MCF 10A (cell line): ENCODE measurements at regions of chr6 and their contacts with region 1.

Region 1: GRCh38 chr6:64280569-64280968 is 645.0 kb downstream of the PHF3 start:
- DNase-seq: peak; percentile 65
- H3K4me3 Mint-ChIP-seq: no peak overlapping the region
- H3K27ac Mint-ChIP-seq: no peak overlapping the region
- H3K4me1 Mint-ChIP-seq: no peaks in the 10 kb centered on the region
- H3K27me3 Mint-ChIP-seq: no peaks in the 10 kb centered on the region
- CTCF ChIP-seq: peak; percentile 47

Region 2: DNA sequence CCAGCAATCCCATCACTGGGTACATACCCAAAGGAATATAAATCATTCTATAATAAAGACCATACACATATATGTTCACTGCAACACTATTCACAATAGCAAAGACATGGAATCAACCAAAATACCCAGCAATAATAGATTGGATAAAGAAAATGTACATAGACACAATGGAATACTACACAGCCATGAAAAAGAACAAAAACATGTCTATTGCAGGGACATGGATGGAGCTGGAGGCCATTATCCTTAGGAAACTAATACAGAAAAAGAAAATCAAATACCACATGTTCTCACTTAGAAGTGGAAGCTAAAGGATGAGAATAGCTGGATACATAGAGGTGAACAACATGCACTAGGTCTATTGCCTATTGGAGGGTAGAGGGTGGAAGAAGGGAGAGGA is 29.6 kb after region 1 on chr6:
- CTCF ChIA-PET with region 1: no interaction called
- POLR2A ChIA-PET with region 1: no interaction called
- intact Hi-C with region 1: no loop called
- DNase-seq: no peak
- H3K4me3 Mint-ChIP-seq: no peak overlapping the region
- H3K27ac Mint-ChIP-seq: no peak overlapping the region
- H3K4me1 Mint-ChIP-seq: no peaks in the 10 kb centered on the region
- H3K27me3 Mint-ChIP-seq: no peaks in the 10 kb centered on the region
- CTCF ChIP-seq: no peak

Region 3: DNA sequence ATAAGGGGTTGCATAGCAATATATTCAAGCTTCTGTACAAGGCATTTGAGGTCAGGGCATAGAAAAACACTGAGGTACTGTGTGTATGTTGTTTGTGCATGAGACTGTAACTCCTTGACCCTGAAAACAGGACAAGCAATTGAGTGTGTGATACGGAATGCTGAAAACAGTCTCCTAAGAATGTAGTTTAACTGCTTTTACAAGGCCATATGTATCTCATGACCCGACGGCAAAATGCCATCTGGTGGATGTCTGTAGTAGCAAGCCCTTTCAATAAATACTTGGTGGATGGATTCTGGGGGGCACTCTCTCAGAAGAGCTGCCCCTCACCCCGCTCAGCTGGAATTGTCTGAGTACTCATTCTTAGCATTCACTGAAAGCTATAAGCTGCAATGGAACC is 1495.7 kb after region 1 on chr6:
- CTCF ChIA-PET with region 1: interaction called, 3 read pairs
- POLR2A ChIA-PET with region 1: no interaction called
- intact Hi-C with region 1: loop called (anchors 2 kb)
- DNase-seq: no peak
- H3K4me3 Mint-ChIP-seq: no peak overlapping the region
- H3K27ac Mint-ChIP-seq: no peak overlapping the region
- H3K4me1 Mint-ChIP-seq: no peaks in the 10 kb centered on the region
- H3K27me3 Mint-ChIP-seq: no peaks in the 10 kb centered on the region
- CTCF ChIP-seq: no peak